PC-3 (cell line): ENCODE measurements at regions of chr2 and their contacts with region 1.

Region 1: DNA sequence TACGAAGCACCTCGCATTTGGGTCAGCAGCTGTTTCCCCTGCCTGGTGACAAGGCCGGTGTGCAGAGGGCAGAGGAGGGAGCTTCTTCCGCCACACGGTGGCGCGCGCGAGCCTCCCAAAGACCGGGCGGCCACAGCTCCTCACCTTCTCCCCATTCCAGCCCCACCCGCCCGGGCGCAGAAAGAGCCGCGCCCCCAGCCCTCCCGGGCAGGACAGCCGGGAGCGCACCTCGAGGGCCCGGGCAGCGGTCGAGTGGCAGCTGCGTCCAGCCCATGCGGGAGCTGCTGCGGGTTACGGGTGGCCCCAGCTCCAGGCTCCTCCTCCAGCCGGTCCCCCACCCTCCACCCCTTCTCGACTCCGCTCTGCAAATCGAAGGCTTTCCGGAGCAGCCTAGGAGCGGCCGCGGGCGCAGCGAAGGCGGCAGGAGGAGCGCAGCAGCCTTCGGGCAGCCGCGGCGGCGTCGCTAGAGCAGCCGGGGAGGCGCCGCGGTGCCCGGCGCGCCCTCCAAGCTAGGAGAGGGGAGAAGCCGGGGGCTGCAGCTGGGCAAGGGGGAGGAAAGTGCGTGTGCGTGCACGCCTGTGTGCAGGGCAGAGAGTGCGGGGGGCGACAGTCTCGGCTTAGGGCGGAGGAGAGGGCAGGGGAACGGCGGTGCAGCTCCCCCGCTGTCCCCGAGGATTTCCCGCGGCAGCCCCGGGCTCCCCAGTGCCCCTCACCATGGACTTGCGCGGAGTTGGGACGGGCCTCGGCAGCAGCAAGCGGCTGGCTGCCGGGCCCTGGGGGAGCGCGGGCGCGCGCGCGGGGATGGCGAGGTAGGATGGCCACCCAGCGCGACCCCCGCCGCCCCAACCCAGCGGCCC is at the start of gene CCDC85A:
- DNase-seq: peak; percentile 83
- ATAC-seq: peak; percentile 90
- H3K4me3 ChIP-seq: peak within 1 kb of the TSS; percentile 76
- H3K27ac ChIP-seq: no peak within 1 kb of the TSS
- H3K4me1 ChIP-seq: no peaks in the 10 kb centered on the region
- H3K27me3 ChIP-seq: peaks cover 92% of the 10 kb centered on the region
- CTCF ChIP-seq: peak; percentile 87
- total RNA-seq, gene CCDC85A: 1.1 and 2.0 TPM in 2 replicates

Region 2: DNA sequence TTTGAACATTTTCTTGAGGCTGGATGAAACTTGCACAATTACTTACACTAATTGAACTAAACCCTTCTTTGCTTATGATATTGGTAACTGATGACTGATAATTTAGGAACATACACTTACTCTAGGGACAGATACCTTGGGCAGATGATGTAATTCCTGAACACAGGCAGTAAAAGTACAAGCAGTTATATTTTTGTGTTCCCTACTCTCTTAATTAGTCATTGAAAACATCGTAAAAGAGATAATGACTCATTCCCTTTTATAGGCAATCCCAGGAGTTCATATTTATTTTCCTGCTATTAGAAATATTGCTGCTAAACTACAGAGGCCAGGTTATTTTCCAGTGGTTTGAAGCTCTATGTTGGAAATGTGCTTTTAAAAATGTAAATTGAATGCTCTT is 46.3 kb after region 1 on chr2:
- CTCF ChIA-PET with region 1: no interaction called
- POLR2A ChIA-PET with region 1: no interaction called
- intact Hi-C with region 1: loop called (anchors 5 kb)
- DNase-seq: peak; percentile 89
- ATAC-seq: peak; percentile 74
- H3K4me3 ChIP-seq: peak overlapping the region; percentile 37; the same call in 1 of the 2 replicates
- H3K27ac ChIP-seq: peak overlapping the region; percentile 72
- H3K4me1 ChIP-seq: peaks cover 31% of the 10 kb centered on the region
- H3K27me3 ChIP-seq: 0 out of 2 replicates have a peak, but pooled peaks cover 5% of the 10 kb centered on the region
- CTCF ChIP-seq: no peak

Region 3: DNA sequence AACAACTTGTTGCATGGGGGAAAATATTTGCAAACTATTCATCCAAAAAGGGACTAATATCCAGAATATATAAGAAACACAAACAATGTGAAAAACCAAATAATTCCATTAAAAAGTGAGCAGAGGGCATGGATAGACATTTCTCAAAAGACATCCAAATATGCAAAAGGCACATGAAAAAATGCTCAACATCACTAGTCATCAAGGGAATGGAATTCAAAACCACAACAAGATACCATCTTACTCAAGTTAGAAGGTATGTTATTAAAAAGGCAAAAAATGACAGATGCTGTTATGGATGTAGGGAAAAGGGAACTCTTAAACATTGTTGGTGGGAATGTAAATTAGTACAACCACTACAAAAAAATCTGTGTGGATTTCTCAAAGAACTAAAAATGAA is 396.4 kb after region 1 on chr2:
- CTCF ChIA-PET with region 1: no interaction called
- POLR2A ChIA-PET with region 1: no interaction called
- intact Hi-C with region 1: loop called (anchors 10 kb)
- DNase-seq: peak; percentile 83
- ATAC-seq: peak; percentile 65
- H3K4me3 ChIP-seq: no peak overlapping the region
- H3K27ac ChIP-seq: no peak overlapping the region
- H3K4me1 ChIP-seq: peaks cover 47% of the 10 kb centered on the region
- H3K27me3 ChIP-seq: no peaks in the 10 kb centered on the region
- CTCF ChIP-seq: no peak

Region 4: DNA sequence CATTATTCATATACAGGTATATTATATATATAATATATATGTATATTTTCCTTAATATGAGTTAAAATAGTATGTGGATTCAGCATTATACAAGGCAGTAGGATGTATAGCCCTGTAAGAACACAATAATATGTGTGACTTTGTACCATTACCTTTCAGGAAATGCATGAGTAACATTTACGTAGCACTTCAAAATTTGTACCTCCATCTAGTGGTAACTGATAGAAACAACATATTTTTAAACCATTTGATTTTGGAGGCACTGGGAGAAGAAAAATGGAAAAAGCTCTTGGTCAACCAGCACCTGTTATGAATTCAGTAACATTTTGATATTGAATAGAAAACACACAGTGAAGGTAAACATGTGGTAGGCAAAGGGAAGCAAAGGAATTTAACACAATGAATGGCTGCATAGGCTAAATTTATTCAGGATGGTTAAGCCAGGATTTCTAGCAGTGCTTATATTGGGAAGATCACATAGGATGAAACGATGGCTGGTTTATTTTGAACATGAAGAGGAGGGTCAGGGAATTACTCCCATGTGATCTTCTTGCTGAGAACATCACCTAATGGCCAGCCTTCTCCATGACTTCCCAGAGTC is 565.4 kb after region 1 on chr2:
- CTCF ChIA-PET with region 1: no interaction called
- POLR2A ChIA-PET with region 1: no interaction called
- intact Hi-C with region 1: loop called (anchors 2 kb)
- DNase-seq: peak; percentile 68
- ATAC-seq: peak; percentile 15; the same call in 1 of the 2 replicates
- H3K4me3 ChIP-seq: no peak overlapping the region
- H3K27ac ChIP-seq: no peak overlapping the region
- H3K4me1 ChIP-seq: no peaks in the 10 kb centered on the region
- H3K27me3 ChIP-seq: peaks cover 16% of the 10 kb centered on the region
- CTCF ChIP-seq: peak; percentile 68

Region 5: GRCh38 chr2:57022496-57022895 is 838.6 kb after region 1 on chr2:
- CTCF ChIA-PET with region 1: interaction called, 4 read pairs
- POLR2A ChIA-PET with region 1: no interaction called
- intact Hi-C with region 1: loop called (anchors 10 kb)
- DNase-seq: no peak
- ATAC-seq: no peak
- H3K4me3 ChIP-seq: no peak overlapping the region
- H3K27ac ChIP-seq: no peak overlapping the region
- H3K4me1 ChIP-seq: no peaks in the 10 kb centered on the region
- H3K27me3 ChIP-seq: no peaks in the 10 kb centered on the region
- CTCF ChIP-seq: no peak

Region 6: GRCh38 chr2:57497489-57498096 is 1313.7 kb after region 1 on chr2:
- CTCF ChIA-PET with region 1: no interaction called
- POLR2A ChIA-PET with region 1: no interaction called
- intact Hi-C with region 1: loop called (anchors 1 kb)
- DNase-seq: peak; percentile 73
- ATAC-seq: peak; percentile 76
- H3K4me3 ChIP-seq: no peak overlapping the region
- H3K27ac ChIP-seq: no peak overlapping the region
- H3K4me1 ChIP-seq: no peaks in the 10 kb centered on the region
- H3K27me3 ChIP-seq: peaks cover 62% of the 10 kb centered on the region
- CTCF ChIP-seq: peak; percentile 88

Region 7: DNA sequence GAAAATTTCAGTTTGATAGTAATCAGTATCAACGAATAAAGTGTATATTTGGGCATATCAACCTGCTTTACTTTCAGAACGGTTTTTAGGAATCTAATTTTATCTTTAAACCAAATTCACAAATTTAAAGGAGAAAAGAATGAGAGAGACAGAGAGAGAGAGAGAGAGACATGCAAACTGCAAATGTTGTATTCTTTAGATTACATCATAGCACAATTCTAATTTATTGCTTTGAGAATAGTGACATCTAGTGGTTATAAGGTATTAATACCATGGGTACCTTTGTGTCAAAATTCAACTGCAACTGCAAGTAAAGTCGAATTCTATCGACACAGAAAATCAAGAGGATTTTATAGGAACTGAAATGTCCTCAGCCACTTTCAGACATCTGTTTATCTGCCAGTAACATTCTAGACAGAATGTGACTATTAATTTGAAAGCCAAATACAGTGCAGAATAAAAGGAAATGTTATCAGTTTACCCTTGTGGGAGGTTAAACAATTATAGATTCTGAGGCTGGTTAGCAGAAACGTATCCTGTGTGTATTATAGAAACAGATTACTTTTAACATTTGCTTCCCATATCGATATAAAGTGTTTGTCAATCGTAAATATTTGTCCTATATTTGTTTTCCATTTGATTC is 1332.9 kb after region 1 on chr2:
- CTCF ChIA-PET with region 1: interaction called, 3 read pairs
- POLR2A ChIA-PET with region 1: no interaction called
- intact Hi-C with region 1: loop called (anchors 1 kb)
- DNase-seq: peak; percentile 70
- ATAC-seq: 0 out of 2 replicates have a peak, but pooled peaks have one; percentile 53
- H3K4me3 ChIP-seq: no peak overlapping the region
- H3K27ac ChIP-seq: no peak overlapping the region
- H3K4me1 ChIP-seq: peaks cover 5% of the 10 kb centered on the region
- H3K27me3 ChIP-seq: peaks cover 28% of the 10 kb centered on the region
- CTCF ChIP-seq: peak; percentile 74